Panc1 (cell line): ENCODE measurements at regions of chr1 and their contacts with region 1.

Region 1: GRCh38 chr1:247390116-247390791 is 25.7 kb upstream of the NLRP3 start:
- DNase-seq: peak; percentile 61
- ATAC-seq: peak; percentile 98
- H3K4me3 ChIP-seq: no peak overlapping the region
- H3K27ac ChIP-seq: no peak overlapping the region
- H3K4me1 ChIP-seq: no peaks in the 10 kb centered on the region; the same call in 1 of the 2 replicates
- H3K27me3 ChIP-seq: no peaks in the 10 kb centered on the region
- CTCF ChIP-seq: peak; percentile 95

Region 2: GRCh38 chr1:247487057-247487456 is 96.8 kb after region 1 on chr1:
- CTCF ChIA-PET with region 1: interaction called, 6 read pairs
- POLR2A ChIA-PET with region 1: no interaction called
- in situ Hi-C with region 1: no loop called
- intact Hi-C with region 1: loop called (anchors 1 kb)
- DNase-seq: peak; percentile 25
- ATAC-seq: peak; percentile 97
- H3K4me3 ChIP-seq: no peak overlapping the region
- H3K27ac ChIP-seq: no peak overlapping the region
- H3K4me1 ChIP-seq: no peaks in the 10 kb centered on the region
- H3K27me3 ChIP-seq: peaks cover 7% of the 10 kb centered on the region
- CTCF ChIP-seq: peak; percentile 71

Region 3: GRCh38 chr1:247517795-247518612 is 127.8 kb after region 1 on chr1:
- CTCF ChIA-PET with region 1: no interaction called
- POLR2A ChIA-PET with region 1: no interaction called
- in situ Hi-C with region 1: no loop called
- intact Hi-C with region 1: no loop called
- DNase-seq: no peak
- ATAC-seq: no peak
- H3K4me3 ChIP-seq: no peak overlapping the region
- H3K27ac ChIP-seq: no peak overlapping the region
- H3K4me1 ChIP-seq: no peaks in the 10 kb centered on the region
- H3K27me3 ChIP-seq: no peaks in the 10 kb centered on the region
- CTCF ChIP-seq: no peak

Region 4: GRCh38 chr1:247552231-247552630 is 162.0 kb after region 1 on chr1:
- CTCF ChIA-PET with region 1: no interaction called
- POLR2A ChIA-PET with region 1: interaction called, 13 read pairs
- in situ Hi-C with region 1: no loop called
- intact Hi-C with region 1: no loop called
- DNase-seq: no peak
- ATAC-seq: no peak
- H3K4me3 ChIP-seq: no peak overlapping the region
- H3K27ac ChIP-seq: no peak overlapping the region
- H3K4me1 ChIP-seq: no peaks in the 10 kb centered on the region
- H3K27me3 ChIP-seq: no peaks in the 10 kb centered on the region
- CTCF ChIP-seq: no peak

Region 5: GRCh38 chr1:247576495-247576894 is 186.2 kb after region 1 on chr1:
- CTCF ChIA-PET with region 1: no interaction called
- POLR2A ChIA-PET with region 1: no interaction called
- in situ Hi-C with region 1: no loop called
- intact Hi-C with region 1: loop called (anchors 1 kb)
- DNase-seq: peak; percentile 5
- ATAC-seq: no peak
- H3K4me3 ChIP-seq: no peak overlapping the region
- H3K27ac ChIP-seq: no peak overlapping the region
- H3K4me1 ChIP-seq: no peaks in the 10 kb centered on the region
- H3K27me3 ChIP-seq: no peaks in the 10 kb centered on the region
- CTCF ChIP-seq: peak; percentile 62